Adrenal gland (tissue), 19 donors: ENCODE measurements at regions of chr1 and their contacts with region 1.

Region 1: DNA sequence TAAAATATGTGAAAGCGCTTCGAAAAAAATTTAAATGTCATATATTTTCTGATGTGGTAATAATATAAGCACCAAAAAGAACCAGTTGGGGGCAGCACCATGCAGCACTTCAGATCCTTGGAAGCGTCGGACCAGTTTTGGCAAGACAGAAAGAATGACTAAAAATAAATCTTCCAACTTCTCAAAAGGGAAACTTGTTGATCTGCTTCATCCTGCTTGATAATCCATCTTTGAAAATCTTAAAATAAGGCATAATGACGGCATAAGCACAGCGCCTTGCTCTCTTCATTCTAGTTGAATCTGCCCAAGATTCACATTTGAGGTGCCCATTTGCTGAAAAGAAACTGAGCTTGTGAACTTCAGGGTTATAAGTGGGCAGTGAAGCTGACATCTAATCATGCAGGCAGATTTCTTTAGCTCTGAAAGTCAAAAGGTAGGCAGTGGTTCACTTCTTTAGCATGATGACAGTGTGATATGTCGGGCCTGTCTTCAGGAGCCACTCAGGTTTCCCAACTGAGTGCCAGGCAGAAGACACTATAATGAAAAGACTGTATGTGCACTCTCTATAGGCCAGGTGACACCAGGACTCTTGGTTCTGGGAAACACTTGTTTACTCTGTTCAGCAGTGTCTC is 19.8 kb upstream of the MUTYH start:
- DNase-seq: peak; percentile 66 to 90 (median 76)
- H3K4me3 ChIP-seq: no peak overlapping the region
- H3K27ac ChIP-seq: peak overlapping the region in 2 of 5 donors; percentile 67 to 68
- H3K4me1 ChIP-seq: peaks cover 3 to 20% of the 10 kb centered on the region in 2 donors
- H3K27me3 ChIP-seq: no peaks in the 10 kb centered on the region
- CTCF ChIP-seq: peak; percentile 69 to 91 (median 76)
- POLR2A ChIP-seq: no peak

Region 2: GRCh38 chr1:45490626-45491486 is 130.9 kb after region 1 on chr1 and contains the start of gene TESK2:
- intact Hi-C with region 1: loop called (anchors 5 kb)
- DNase-seq: peak; percentile 98 to 100 (median 99)
- H3K4me3 ChIP-seq: peak within 1 kb of the TSS; percentile 49 to 90 (median 72)
- H3K27ac ChIP-seq: peak within 1 kb of the TSS in 4 of 5 donors; percentile 45 to 87 (median 74)
- H3K4me1 ChIP-seq: peaks cover 6 to 12% of the 10 kb centered on the region in 2 donors
- H3K27me3 ChIP-seq: no peaks in the 10 kb centered on the region
- CTCF ChIP-seq: peak in 4 of 6 experiments; percentile 24 to 47 (median 38)
- POLR2A ChIP-seq: peak; percentile 52 to 93
- total RNA-seq, gene TESK2: 1.1 to 21.4 (median 4.2) TPM

Region 3: DNA sequence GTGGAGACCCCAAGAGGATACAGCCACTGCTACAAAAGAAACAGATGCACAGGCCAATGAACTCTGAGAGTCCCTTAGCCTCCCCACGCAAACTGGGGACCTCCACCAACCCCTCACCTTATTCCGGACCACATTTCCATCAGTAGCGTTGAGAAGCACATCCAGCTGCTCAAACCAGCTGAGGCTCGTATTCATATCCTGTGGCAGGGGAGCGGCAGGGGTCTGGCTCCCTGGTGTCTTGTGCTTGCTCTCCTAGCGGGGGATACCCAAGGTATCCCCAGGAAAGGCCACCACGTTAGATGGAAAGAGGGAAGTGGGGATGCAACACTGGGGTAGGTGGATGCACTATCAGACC is 139.4 kb after region 1 on chr1:
- intact Hi-C with region 1: loop called (anchors 5 kb)
- DNase-seq: peak in 2 of 7 donors; percentile 21 to 59
- H3K4me3 ChIP-seq: peak overlapping the region in 2 of 4 donors; percentile 55 to 71
- H3K27ac ChIP-seq: peak overlapping the region in 3 of 5 donors; percentile 18 to 45 (median 39)
- H3K4me1 ChIP-seq: peaks cover 0 to 20% of the 10 kb centered on the region in 2 donors
- H3K27me3 ChIP-seq: no peaks in the 10 kb centered on the region
- CTCF ChIP-seq: no peak
- POLR2A ChIP-seq: no peak